Caco-2 (cell line): ENCODE measurements at regions of chr3 and their contacts with region 1.

Region 1: DNA sequence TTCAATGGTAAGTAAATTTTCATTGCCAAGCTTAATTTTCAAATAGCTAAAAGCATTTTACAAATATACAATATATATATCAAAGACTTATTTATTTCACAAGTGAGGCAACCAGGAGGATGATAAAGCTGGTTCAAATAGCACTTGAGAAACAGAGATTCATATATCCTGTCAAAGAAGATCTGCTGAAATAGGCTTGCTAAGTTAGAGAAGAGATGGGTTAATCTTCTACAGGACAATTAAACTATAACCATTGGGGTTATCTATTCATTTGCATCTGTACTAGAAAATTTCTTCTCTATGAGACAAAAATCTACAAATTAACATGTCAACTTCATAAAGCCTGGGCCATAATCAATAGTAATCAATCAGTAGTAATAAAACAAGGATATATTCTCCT is 637.7 kb upstream of the UBE2E2 start:
- DNase-seq: no peak
- H3K4me3 ChIP-seq: no peak overlapping the region
- H3K4me3 Mint-ChIP-seq: no peak overlapping the region
- H3K27ac Mint-ChIP-seq: no peak overlapping the region
- H3K4me1 ChIP-seq: peaks cover 25% of the 10 kb centered on the region
- H3K4me1 Mint-ChIP-seq: no peaks in the 10 kb centered on the region
- H3K27me3 ChIP-seq: no peaks in the 10 kb centered on the region
- H3K27me3 Mint-ChIP-seq: no peaks in the 10 kb centered on the region
- CTCF ChIP-seq: no peak

Region 2: DNA sequence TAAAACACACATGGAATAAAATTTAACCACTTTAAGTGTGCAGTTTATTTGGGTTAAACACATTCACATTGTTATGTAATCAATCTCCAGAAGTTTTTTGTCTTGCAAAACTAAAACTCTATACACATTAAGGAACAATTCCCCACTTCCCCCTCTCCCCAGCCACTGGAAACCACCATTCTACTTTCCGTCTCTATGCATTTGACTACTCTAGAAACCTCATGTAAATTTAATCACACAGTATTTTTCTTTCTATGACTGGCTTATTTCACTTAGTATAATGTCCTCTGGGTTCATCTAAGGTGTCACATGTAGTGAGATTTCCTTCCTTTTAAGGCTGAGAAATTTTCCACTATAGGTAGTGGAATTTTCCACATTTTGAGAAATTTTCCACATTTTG is 69.0 kb after region 1 on chr3:
- CTCF ChIA-PET with region 1: no interaction called
- POLR2A ChIA-PET with region 1: no interaction called
- intact Hi-C with region 1: loop called (anchors 1 kb)
- DNase-seq: no peak
- H3K4me3 ChIP-seq: no peak overlapping the region
- H3K4me3 Mint-ChIP-seq: no peak overlapping the region
- H3K27ac Mint-ChIP-seq: no peak overlapping the region
- H3K4me1 ChIP-seq: no peaks in the 10 kb centered on the region
- H3K4me1 Mint-ChIP-seq: no peaks in the 10 kb centered on the region
- H3K27me3 ChIP-seq: no peaks in the 10 kb centered on the region
- H3K27me3 Mint-ChIP-seq: no peaks in the 10 kb centered on the region
- CTCF ChIP-seq: no peak

Region 3: GRCh38 chr3:22685597-22685996 is 120.2 kb after region 1 on chr3:
- CTCF ChIA-PET with region 1: interaction called, 7 read pairs
- POLR2A ChIA-PET with region 1: no interaction called
- intact Hi-C with region 1: loop called (anchors 1 kb)
- DNase-seq: peak in 1 of 2 experiments; percentile 19
- H3K4me3 ChIP-seq: no peak overlapping the region
- H3K4me3 Mint-ChIP-seq: no peak overlapping the region
- H3K27ac Mint-ChIP-seq: no peak overlapping the region
- H3K4me1 ChIP-seq: no peaks in the 10 kb centered on the region
- H3K4me1 Mint-ChIP-seq: no peaks in the 10 kb centered on the region
- H3K27me3 ChIP-seq: no peaks in the 10 kb centered on the region
- H3K27me3 Mint-ChIP-seq: peaks cover 13% of the 10 kb centered on the region
- CTCF ChIP-seq: peak; percentile 26 to 36

Region 4: DNA sequence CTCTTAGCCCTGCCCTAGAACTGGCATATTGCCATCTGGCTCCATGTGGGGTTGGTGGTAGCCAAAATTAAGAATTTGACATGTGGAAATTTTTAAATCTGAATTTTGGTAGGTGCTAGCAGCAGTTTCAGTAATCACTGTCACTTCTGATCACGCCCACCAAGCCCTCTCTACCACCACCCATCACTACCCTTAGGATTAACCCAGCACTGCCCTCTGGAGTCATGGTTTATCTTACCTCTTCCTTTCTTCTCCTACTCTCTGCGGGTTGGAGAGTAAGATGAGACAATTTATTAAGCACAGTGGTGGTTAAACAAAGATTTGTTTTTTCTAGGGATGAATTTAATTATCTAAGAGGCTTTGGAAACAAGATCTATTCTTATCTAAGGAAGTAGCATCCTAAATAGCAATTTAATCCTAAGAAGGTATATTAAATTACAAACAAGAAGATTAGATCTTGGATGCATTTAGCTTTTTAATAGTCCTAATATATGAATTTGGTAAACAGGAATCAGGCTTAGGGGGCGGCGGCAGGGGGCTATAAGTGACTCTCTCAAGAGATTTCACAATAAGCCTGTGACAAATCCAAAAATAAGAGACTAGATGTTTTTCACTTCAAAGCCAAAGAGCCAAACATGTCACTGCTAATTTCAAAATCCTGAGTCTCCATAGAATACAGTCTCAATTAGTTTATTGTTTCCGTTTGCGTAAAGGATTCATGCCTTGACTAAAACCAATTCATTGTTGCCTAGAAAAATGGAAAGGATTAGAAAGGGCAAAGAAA is 139.4 kb after region 1 on chr3:
- CTCF ChIA-PET with region 1: no interaction called
- POLR2A ChIA-PET with region 1: no interaction called
- intact Hi-C with region 1: loop called (anchors 1 kb)
- DNase-seq: no peak
- H3K4me3 ChIP-seq: no peak overlapping the region
- H3K4me3 Mint-ChIP-seq: no peak overlapping the region
- H3K27ac Mint-ChIP-seq: no peak overlapping the region
- H3K4me1 ChIP-seq: no peaks in the 10 kb centered on the region
- H3K4me1 Mint-ChIP-seq: no peaks in the 10 kb centered on the region
- H3K27me3 ChIP-seq: no peaks in the 10 kb centered on the region
- H3K27me3 Mint-ChIP-seq: peaks cover 2% of the 10 kb centered on the region
- CTCF ChIP-seq: no peak

Region 5: DNA sequence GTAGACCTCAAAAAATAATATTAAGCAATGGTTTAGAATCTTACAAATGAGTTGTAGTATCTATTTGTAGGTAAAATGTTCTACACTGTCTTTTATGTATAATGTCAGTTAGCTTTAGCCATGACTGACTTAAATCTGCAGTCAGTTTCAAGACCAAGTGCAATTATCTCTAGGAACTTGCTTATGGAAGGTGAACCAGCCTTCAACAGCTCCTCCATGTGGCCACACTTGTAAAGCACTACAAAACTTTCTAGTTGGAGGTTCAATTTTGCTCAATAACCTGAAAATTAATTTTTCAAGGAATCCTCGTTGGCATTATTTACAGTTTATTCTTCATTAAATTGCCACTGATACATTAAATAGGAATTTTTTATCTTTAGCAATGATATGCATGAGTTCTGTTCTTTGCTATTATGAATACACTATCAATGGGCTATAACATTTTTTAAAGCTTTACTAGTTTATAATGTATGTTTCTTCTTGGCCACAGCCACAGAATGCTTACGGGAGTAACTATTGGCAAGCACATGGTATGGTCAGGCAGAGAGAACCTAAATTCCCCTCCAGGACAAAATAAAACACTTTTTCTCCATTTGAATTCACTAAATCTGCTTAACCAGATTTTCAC is 322.4 kb after region 1 on chr3:
- CTCF ChIA-PET with region 1: no interaction called
- POLR2A ChIA-PET with region 1: no interaction called
- intact Hi-C with region 1: loop called (anchors 1 kb)
- DNase-seq: peak in 1 of 2 experiments; percentile 16
- H3K4me3 ChIP-seq: no peak overlapping the region
- H3K4me3 Mint-ChIP-seq: no peak overlapping the region
- H3K27ac Mint-ChIP-seq: no peak overlapping the region
- H3K4me1 ChIP-seq: no peaks in the 10 kb centered on the region
- H3K4me1 Mint-ChIP-seq: no peaks in the 10 kb centered on the region
- H3K27me3 ChIP-seq: no peaks in the 10 kb centered on the region
- H3K27me3 Mint-ChIP-seq: peaks cover 10% of the 10 kb centered on the region
- CTCF ChIP-seq: peak; percentile 45 to 70

Region 6: DNA sequence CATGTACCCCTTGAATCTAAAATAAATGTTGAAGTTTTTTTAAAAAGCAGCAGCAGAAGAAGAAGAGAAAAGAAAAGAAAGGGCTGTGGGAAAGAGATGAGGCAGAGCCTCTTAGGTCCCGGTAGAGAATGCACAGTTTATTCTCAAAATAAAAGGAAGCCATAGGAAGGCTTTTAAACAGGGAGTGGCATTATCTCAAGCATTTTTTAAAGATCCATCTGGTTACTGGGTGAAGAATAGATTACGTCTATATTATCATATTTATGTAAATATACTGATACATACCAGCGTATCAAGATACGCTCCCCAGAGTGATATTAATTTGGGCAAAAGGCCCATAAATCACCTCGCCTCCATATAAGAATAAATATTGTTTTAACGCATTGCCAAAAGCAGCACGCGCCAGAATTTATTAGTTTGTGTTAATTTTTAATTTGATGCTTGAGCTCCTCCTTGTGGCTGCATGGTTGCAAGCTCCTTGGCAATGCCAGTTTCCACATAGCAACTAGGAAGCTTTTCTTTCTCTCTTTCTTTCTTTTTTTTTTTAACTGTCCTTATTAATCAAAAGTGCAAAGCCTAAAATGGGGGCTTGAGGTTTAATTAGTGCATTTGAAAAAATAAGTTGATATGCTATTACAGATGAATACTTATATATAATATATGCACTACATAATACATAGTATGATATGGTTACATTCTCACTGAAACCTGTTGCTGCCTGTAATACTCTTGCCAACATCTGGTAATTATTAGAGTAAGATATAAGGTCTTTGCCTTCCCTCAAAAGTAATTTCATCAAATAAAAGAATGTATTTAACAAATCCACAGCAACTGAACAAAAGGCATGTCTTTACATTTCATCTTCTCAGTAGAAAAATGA is 395.0 kb after region 1 on chr3:
- CTCF ChIA-PET with region 1: interaction called, 3 read pairs
- POLR2A ChIA-PET with region 1: no interaction called
- intact Hi-C with region 1: loop called (anchors 1 kb)
- DNase-seq: peak in 1 of 2 experiments; percentile 40
- H3K4me3 ChIP-seq: no peak overlapping the region
- H3K4me3 Mint-ChIP-seq: no peak overlapping the region
- H3K27ac Mint-ChIP-seq: no peak overlapping the region
- H3K4me1 ChIP-seq: no peaks in the 10 kb centered on the region
- H3K4me1 Mint-ChIP-seq: no peaks in the 10 kb centered on the region
- H3K27me3 ChIP-seq: no peaks in the 10 kb centered on the region
- H3K27me3 Mint-ChIP-seq: peaks cover 6% of the 10 kb centered on the region
- CTCF ChIP-seq: peak in 1 of 2 experiments; percentile 76